HCT116 (cell line): ENCODE measurements at regions of chr11 and their contacts with region 1.

Region 1: DNA sequence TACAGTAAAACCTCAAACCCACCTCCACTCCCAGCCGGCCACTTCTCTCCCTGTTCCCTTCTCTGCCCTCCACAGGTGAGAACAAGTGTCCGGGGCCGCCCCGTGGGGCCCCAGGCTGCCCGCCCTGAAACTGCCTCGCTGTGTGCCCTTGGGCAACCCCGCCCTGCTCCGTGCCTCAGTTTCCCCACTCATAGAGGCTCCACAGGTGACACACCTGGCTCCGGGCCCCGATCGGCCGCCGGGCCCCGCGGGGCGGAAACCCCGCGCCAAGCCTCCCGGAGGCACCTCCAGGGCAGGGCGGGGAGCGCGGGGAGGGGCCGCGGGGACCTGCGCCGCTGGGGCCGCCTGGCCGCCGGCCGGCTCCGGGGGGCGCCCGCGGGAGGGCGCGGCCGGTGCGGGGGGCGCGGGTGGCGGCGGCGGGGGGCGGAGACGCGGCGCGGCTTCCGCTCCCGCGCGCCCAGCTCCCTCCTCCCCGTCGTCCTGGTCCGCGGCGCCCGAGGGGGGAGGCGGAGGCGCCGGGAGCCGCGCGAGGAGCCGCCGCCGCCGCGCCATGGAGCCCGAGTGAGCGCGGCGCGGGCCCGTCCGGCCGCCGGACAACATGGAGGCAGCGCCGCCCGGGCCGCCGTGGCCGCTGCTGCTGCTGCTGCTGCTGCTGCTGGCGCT is at the start of gene LRP5:
- DNase-seq: no peak
- ATAC-seq: peak; percentile 55
- H3K4me3 ChIP-seq: peak within 1 kb of the TSS; percentile 69 to 95
- H3K27ac ChIP-seq: peak within 1 kb of the TSS; percentile 93
- H3K4me1 ChIP-seq: peaks cover 33 to 60% of the 10 kb centered on the region in 2 experiments
- H3K27me3 ChIP-seq: no peaks in the 10 kb centered on the region
- CTCF ChIP-seq: no peak
- POLR2A ChIP-seq: no peak
- RAD21 ChIP-seq: no peak
- total RNA-seq, gene LRP5: 55.2 TPM

Region 2: GRCh38 chr11:68066742-68067141 is 245.5 kb before region 1 on chr11:
- CTCF ChIA-PET with region 1: no interaction called
- POLR2A ChIA-PET with region 1: no interaction called
- RAD21 ChIA-PET with region 1: no interaction called
- intact Hi-C with region 1: no loop called
- DNase-seq: no peak
- ATAC-seq: no peak
- H3K4me3 ChIP-seq: no peak overlapping the region
- H3K27ac ChIP-seq: no peak overlapping the region
- H3K4me1 ChIP-seq: no peaks in the 10 kb centered on the region
- H3K27me3 ChIP-seq: no peaks in the 10 kb centered on the region
- CTCF ChIP-seq: no peak
- POLR2A ChIP-seq: no peak
- RAD21 ChIP-seq: no peak

Region 3: DNA sequence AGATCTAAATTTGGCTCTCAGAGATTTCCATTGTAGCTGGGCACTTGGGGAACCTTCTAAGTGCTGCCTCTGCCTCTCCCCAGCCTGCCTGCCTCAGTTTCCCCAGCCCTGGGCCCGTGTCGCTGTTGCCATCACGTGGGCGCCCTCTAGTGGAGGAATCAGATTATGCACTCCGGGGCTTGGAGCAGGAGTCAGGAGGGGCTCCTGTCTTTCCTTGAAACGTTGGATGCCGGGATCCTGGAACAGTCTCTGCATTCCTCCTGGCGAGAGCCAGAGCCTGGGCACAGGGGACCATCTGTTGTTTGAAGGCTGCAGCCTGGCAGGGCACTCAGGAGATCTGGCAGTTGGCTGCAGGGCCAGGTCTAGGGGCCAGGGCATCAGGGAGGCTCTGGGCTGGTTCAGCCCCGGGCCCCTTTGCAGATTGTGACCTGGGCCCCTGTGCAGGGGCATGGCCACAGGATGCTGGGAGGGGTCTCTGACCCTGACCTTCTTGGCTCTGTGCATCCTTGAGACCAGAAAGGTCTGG is 71.8 kb after region 1 on chr11:
- CTCF ChIA-PET with region 1: no interaction called
- POLR2A ChIA-PET with region 1: no interaction called
- RAD21 ChIA-PET with region 1: no interaction called
- intact Hi-C with region 1: loop called (anchors 10 kb)
- DNase-seq: peak; percentile 24
- ATAC-seq: peak; percentile 80
- H3K4me3 ChIP-seq: no peak overlapping the region
- H3K27ac ChIP-seq: no peak overlapping the region
- H3K4me1 ChIP-seq: no peaks in the 10 kb centered on the region; a peak in 1 of 4 replicates
- H3K27me3 ChIP-seq: no peaks in the 10 kb centered on the region
- CTCF ChIP-seq: peak; percentile 86 to 98 (median 92)
- POLR2A ChIP-seq: no peak
- RAD21 ChIP-seq: peak; percentile 96